Caco-2 (cell line): ENCODE measurements at regions of chr17 and their contacts with region 1.

Region 1: DNA sequence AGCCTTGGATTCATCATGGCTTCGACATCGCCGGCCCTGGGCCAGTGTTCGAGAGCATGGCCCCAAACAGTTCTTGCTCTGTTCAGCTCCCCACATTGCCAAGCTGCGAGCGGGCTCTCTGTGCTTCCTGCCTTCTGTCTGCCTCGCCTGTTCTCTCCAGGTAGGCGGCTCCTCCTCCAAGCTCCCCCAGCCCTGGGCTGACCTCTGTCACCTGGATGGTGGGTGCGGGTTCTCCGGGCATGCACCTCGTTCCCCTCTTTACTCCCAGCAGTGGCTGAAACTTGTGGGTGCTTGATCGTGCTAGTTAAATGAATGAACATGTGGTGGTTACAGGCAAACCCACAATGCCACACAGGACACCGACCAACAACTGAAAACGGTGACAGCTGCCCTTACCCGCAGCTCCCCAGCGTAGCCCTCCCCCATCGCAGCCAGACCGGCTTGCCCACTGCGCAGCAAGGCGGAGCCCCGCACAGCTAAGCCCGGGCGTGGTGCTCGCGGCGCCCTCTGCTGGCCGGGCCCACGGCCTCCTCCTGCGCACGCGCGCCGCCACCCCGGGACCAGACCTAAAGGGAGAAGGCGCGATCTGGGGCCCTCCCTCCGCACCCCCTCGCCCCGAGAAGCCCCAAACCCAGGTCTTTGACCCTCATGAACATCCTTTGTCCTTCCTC is 23.0 kb upstream of the EIF1 start:
- DNase-seq: peak; percentile 89 to 96
- H3K4me3 ChIP-seq: peak overlapping the region; percentile 54
- H3K4me3 Mint-ChIP-seq: peak overlapping the region; percentile 83
- H3K27ac Mint-ChIP-seq: peak overlapping the region; percentile 78
- H3K4me1 ChIP-seq: peaks cover 11% of the 10 kb centered on the region
- H3K4me1 Mint-ChIP-seq: peaks cover 18% of the 10 kb centered on the region
- H3K27me3 ChIP-seq: no peaks in the 10 kb centered on the region
- H3K27me3 Mint-ChIP-seq: no peaks in the 10 kb centered on the region
- CTCF ChIP-seq: peak; percentile 81 to 97

Region 2: GRCh38 chr17:40803617-40804082 is 862.1 kb before region 1 on chr17:
- CTCF ChIA-PET with region 1: no interaction called
- POLR2A ChIA-PET with region 1: no interaction called
- intact Hi-C with region 1: loop called (anchors 2 kb)
- DNase-seq: peak; percentile 87 to 91
- H3K4me3 ChIP-seq: no peak overlapping the region
- H3K4me3 Mint-ChIP-seq: no peak overlapping the region
- H3K27ac Mint-ChIP-seq: no peak overlapping the region
- H3K4me1 ChIP-seq: 0 out of 2 replicates have a peak, but pooled peaks cover 5% of the 10 kb centered on the region
- H3K4me1 Mint-ChIP-seq: no peaks in the 10 kb centered on the region
- H3K27me3 ChIP-seq: no peaks in the 10 kb centered on the region
- H3K27me3 Mint-ChIP-seq: peaks cover 4% of the 10 kb centered on the region
- CTCF ChIP-seq: peak; percentile 96

Region 3: DNA sequence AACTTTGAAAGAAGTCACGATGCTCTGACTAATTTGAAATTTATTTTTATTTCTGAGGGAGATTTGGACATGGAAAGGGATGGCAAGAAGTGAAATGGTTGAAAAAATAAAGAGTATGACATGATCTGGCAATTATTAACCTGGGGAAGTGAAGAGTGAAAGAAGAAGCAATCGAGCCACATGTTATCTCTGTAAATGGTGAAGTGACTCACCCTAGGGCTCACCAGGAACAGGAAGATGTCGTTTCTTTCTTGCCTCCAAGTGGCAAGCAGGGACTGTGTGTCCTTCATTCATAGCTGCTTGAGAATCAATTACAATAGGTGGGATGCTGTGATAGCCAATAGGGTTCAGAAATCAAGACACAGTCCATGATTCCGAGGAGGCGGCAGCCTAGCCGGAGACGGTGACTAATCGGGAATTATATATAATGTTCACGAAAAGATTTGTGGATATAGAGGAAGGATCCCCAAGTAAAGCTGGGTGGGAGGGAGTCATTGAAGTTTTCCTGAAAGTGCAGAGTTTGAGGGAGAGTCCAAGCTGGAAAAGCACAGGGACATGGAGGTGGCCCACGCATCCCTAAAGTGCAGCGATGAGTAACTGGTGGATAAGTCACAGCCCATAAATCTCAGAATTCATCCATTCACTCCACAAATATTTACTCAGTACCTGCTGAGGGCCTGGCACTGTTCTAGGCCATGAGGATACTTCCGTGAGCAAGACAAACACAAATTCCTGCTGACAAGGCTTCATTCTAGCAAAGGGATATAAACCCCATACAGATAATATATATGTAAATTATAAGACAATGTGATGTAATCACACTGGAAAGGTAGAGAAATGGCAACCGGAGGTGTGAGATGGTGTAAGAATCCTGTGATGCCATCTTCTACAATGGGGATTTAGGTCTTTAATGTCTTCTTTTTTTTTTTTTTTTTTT is 762.3 kb before region 1 on chr17:
- CTCF ChIA-PET with region 1: interaction called, 6 read pairs
- POLR2A ChIA-PET with region 1: interaction called, 3 read pairs
- intact Hi-C with region 1: loop called (anchors 5 kb)
- DNase-seq: peak; percentile 69 to 70
- H3K4me3 ChIP-seq: no peak overlapping the region
- H3K4me3 Mint-ChIP-seq: peak overlapping the region; percentile 65
- H3K27ac Mint-ChIP-seq: peak overlapping the region; percentile 95
- H3K4me1 ChIP-seq: peaks cover 51% of the 10 kb centered on the region
- H3K4me1 Mint-ChIP-seq: peaks cover 44% of the 10 kb centered on the region
- H3K27me3 ChIP-seq: no peaks in the 10 kb centered on the region
- H3K27me3 Mint-ChIP-seq: no peaks in the 10 kb centered on the region
- CTCF ChIP-seq: no peak

Region 4: GRCh38 chr17:41417576-41418015 is 248.1 kb before region 1 on chr17:
- CTCF ChIA-PET with region 1: interaction called, 6 read pairs
- POLR2A ChIA-PET with region 1: no interaction called
- intact Hi-C with region 1: loop called (anchors 5 kb)
- DNase-seq: peak; percentile 63 to 65
- H3K4me3 ChIP-seq: no peak overlapping the region
- H3K4me3 Mint-ChIP-seq: no peak overlapping the region
- H3K27ac Mint-ChIP-seq: peak overlapping the region; percentile 5
- H3K4me1 ChIP-seq: peaks cover 60% of the 10 kb centered on the region
- H3K4me1 Mint-ChIP-seq: peaks cover 70% of the 10 kb centered on the region
- H3K27me3 ChIP-seq: no peaks in the 10 kb centered on the region
- H3K27me3 Mint-ChIP-seq: no peaks in the 10 kb centered on the region
- CTCF ChIP-seq: peak; percentile 70 to 71

Region 5: GRCh38 chr17:41620586-41621434 is 44.9 kb before region 1 on chr17:
- CTCF ChIA-PET with region 1: no interaction called
- POLR2A ChIA-PET with region 1: no interaction called
- intact Hi-C with region 1: no loop called
- DNase-seq: peak in 1 of 2 experiments; percentile 25
- H3K4me3 ChIP-seq: no peak overlapping the region
- H3K4me3 Mint-ChIP-seq: no peak overlapping the region
- H3K27ac Mint-ChIP-seq: no peak overlapping the region
- H3K4me1 ChIP-seq: no peaks in the 10 kb centered on the region
- H3K4me1 Mint-ChIP-seq: peaks cover 6% of the 10 kb centered on the region
- H3K27me3 ChIP-seq: no peaks in the 10 kb centered on the region
- H3K27me3 Mint-ChIP-seq: no peaks in the 10 kb centered on the region
- CTCF ChIP-seq: no peak

Region 6: GRCh38 chr17:41639492-41640473 is 25.9 kb before region 1 on chr17:
- CTCF ChIA-PET with region 1: interaction called, 11 read pairs
- POLR2A ChIA-PET with region 1: no interaction called
- intact Hi-C with region 1: no loop called
- DNase-seq: no peak
- H3K4me3 ChIP-seq: no peak overlapping the region
- H3K4me3 Mint-ChIP-seq: no peak overlapping the region
- H3K27ac Mint-ChIP-seq: no peak overlapping the region
- H3K4me1 ChIP-seq: no peaks in the 10 kb centered on the region
- H3K4me1 Mint-ChIP-seq: no peaks in the 10 kb centered on the region
- H3K27me3 ChIP-seq: no peaks in the 10 kb centered on the region
- H3K27me3 Mint-ChIP-seq: no peaks in the 10 kb centered on the region
- CTCF ChIP-seq: no peak

Region 7: GRCh38 chr17:41678907-41679739 is 13.4 kb after region 1 on chr17:
- CTCF ChIA-PET with region 1: interaction called, 11 read pairs
- POLR2A ChIA-PET with region 1: no interaction called
- intact Hi-C with region 1: no loop called
- DNase-seq: no peak
- H3K4me3 ChIP-seq: no peak overlapping the region
- H3K4me3 Mint-ChIP-seq: no peak overlapping the region
- H3K27ac Mint-ChIP-seq: no peak overlapping the region
- H3K4me1 ChIP-seq: peaks cover 23% of the 10 kb centered on the region
- H3K4me1 Mint-ChIP-seq: peaks cover 26% of the 10 kb centered on the region
- H3K27me3 ChIP-seq: no peaks in the 10 kb centered on the region
- H3K27me3 Mint-ChIP-seq: no peaks in the 10 kb centered on the region
- CTCF ChIP-seq: peak in 1 of 2 experiments; percentile 18

Region 8: GRCh38 chr17:41957031-41957868 is 291.5 kb after region 1 on chr17:
- CTCF ChIA-PET with region 1: no interaction called
- POLR2A ChIA-PET with region 1: no interaction called
- intact Hi-C with region 1: no loop called
- DNase-seq: no peak
- H3K4me3 ChIP-seq: no peak overlapping the region
- H3K4me3 Mint-ChIP-seq: no peak overlapping the region
- H3K27ac Mint-ChIP-seq: no peak overlapping the region
- H3K4me1 ChIP-seq: peaks cover 13% of the 10 kb centered on the region
- H3K4me1 Mint-ChIP-seq: peaks cover 13% of the 10 kb centered on the region
- H3K27me3 ChIP-seq: no peaks in the 10 kb centered on the region
- H3K27me3 Mint-ChIP-seq: no peaks in the 10 kb centered on the region
- CTCF ChIP-seq: no peak